ENCODE measurements at regions of chr2 and their contacts with region 1.

Region 1: DNA sequence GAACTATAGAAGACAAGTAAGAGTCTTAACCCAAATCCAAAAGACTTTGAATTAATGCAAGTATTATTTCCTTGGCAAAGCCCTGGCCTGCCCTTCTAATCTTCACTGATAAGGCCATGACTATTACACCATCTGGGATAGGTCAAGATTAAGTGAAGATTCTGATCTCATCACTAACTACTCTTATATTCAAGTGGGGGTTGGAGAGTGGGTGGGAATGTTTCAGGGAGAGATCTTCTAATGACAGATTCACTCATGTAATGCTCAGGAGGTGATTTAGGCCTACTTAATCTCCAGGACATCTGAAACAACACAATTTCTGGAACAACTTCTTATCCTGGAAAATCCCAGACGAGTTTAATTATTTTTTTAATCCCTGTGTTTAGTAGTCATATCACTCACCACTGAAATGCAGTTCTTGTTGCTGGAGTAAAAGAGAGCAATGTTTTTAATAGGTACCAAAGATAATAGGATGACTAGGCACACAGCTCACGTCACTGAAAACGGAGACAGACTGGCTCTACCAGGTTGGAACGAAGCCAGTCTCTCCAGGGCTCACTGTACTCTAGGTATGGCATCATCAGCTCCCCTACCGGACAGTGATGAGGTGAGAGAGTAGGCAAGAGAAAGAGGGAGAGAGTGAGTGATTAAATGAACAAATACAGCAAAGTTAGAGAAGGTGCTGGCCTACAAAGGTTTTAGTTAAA is 133.1 kb downstream of the NCKAP5 start:
- DNase-seq: peak; percentile 65
- ATAC-seq: no peak
- H3K4me3 ChIP-seq: no peak overlapping the region
- H3K27ac ChIP-seq: no peak overlapping the region
- H3K4me1 ChIP-seq: peaks cover 16% of the 10 kb centered on the region
- H3K27me3 ChIP-seq: no peaks in the 10 kb centered on the region
- CTCF ChIP-seq: peak; percentile 24; the same call in 1 of the 2 replicates

Region 2: GRCh38 chr2:133193544-133194361 is 241.4 kb before region 1 on chr2:
- CTCF ChIA-PET with region 1: no interaction called
- POLR2A ChIA-PET with region 1: no interaction called
- intact Hi-C with region 1: loop called (anchors 10 kb)
- DNase-seq: no peak
- ATAC-seq: no peak
- H3K4me3 ChIP-seq: no peak overlapping the region
- H3K27ac ChIP-seq: no peak overlapping the region
- H3K4me1 ChIP-seq: peaks cover 6% of the 10 kb centered on the region
- H3K27me3 ChIP-seq: no peaks in the 10 kb centered on the region
- CTCF ChIP-seq: no peak

Region 3: GRCh38 chr2:133541376-133541775 is 106.3 kb after region 1 on chr2:
- CTCF ChIA-PET with region 1: no interaction called
- POLR2A ChIA-PET with region 1: no interaction called
- intact Hi-C with region 1: no loop called
- DNase-seq: no peak
- ATAC-seq: no peak
- H3K4me3 ChIP-seq: no peak overlapping the region
- H3K27ac ChIP-seq: peak overlapping the region; percentile 5; the same call in 1 of the 2 replicates
- H3K4me1 ChIP-seq: 0 out of 2 replicates have a peak, but pooled peaks cover 6% of the 10 kb centered on the region
- H3K27me3 ChIP-seq: no peaks in the 10 kb centered on the region
- CTCF ChIP-seq: no peak

Measured in PC-3 (cell line).